IMR-90 (cell line): ENCODE measurements at regions of chr11 and their contacts with region 1.

Region 1: GRCh38 chr11:129785383-129786111 is 30.1 kb upstream of the TMEM45B start:
- DNase-seq: peak; percentile 1
- ATAC-seq: peak; percentile 17; the same call in 1 of the 2 replicates
- H3K4me3 ChIP-seq: no peak overlapping the region
- H3K27ac ChIP-seq: no peak overlapping the region
- H3K4me1 ChIP-seq: no peaks in the 10 kb centered on the region
- H3K27me3 ChIP-seq: peaks cover 6% of the 10 kb centered on the region
- CTCF ChIP-seq: peak; percentile 30
- POLR2A ChIP-seq: no peak
- RAD21 ChIP-seq: peak; percentile 28; the same call in 1 of the 2 replicates

Region 2: GRCh38 chr11:129880311-129880710 is 94.8 kb after region 1 on chr11:
- CTCF ChIA-PET with region 1: no interaction called
- POLR2A ChIA-PET with region 1: no interaction called
- dilution Hi-C with region 1: no loop called
- in situ Hi-C with region 1: no loop called
- intact Hi-C with region 1: loop called (anchors 1 kb)
- DNase-seq: no peak
- ATAC-seq: no peak
- H3K4me3 ChIP-seq: no peak overlapping the region
- H3K27ac ChIP-seq: no peak overlapping the region
- H3K4me1 ChIP-seq: no peaks in the 10 kb centered on the region
- H3K27me3 ChIP-seq: no peaks in the 10 kb centered on the region
- CTCF ChIP-seq: no peak
- POLR2A ChIP-seq: no peak
- RAD21 ChIP-seq: no peak